Naive thymus-derived CD4-positive, alpha-beta T cell (primary cell): ENCODE measurements at regions of chr17 and their contacts with region 1.

Region 1: GRCh38 chr17:47229535-47230443 is 20.6 kb downstream of the MYL4 start:
- DNase-seq: peak; percentile 33 to 67 (median 61)
- ATAC-seq: peak; percentile 93
- H3K4me3 ChIP-seq: peak overlapping the region; percentile 22
- H3K4me3 Mint-ChIP-seq: peak overlapping the region; percentile 50 to 75 (median 62)
- H3K27ac ChIP-seq: no peak overlapping the region
- H3K27ac Mint-ChIP-seq: peak overlapping the region in 1 of 9 donors; percentile 32
- H3K4me1 ChIP-seq: peaks cover 0 to 3% of the 10 kb centered on the region in 2 donors
- H3K4me1 Mint-ChIP-seq: peaks cover 6 to 17% (median 11%) of the 10 kb centered on the region in 7 donors
- H3K27me3 ChIP-seq: no peaks in the 10 kb centered on the region
- H3K27me3 Mint-ChIP-seq: peaks cover 0 to 15% (median 7%) of the 10 kb centered on the region in 5 donors

Region 2: DNA sequence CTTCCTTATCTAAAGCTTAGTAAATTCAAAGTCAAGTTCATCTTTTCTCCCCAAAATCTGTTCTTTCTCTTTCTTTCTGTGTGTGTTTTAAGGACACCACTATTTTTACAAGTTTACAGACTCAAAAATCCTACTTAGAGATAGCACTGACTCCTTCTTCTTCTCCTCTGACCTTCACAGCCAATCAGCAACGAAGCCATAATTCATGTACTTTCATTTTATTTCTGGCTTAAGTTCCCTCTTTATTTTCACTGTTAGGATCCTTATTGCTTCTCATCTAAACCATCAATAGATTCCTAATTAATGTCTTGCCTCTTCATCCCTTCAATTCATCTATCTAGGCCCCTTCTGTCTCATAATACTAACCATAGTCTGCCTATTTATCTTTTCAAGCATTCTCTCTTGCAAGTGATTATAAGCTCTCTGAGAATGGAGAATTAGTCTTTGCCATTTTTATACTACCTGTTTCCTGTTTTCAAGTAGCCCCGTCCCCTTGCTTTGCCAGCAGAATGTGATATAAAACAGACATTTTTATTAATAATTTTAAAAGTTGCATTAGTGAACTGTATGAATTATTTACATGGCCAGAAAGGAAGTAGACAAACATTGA is 67.7 kb before region 1 on chr17:
- CTCF ChIA-PET with region 1: no interaction called
- POLR2A ChIA-PET with region 1: no interaction called
- intact Hi-C with region 1: no loop called
- DNase-seq: no peak
- ATAC-seq: no peak
- H3K4me3 ChIP-seq: no peak overlapping the region
- H3K4me3 Mint-ChIP-seq: peak overlapping the region in 8 of 10 donors; percentile 3 to 68 (median 24)
- H3K27ac ChIP-seq: no peak overlapping the region
- H3K27ac Mint-ChIP-seq: peak overlapping the region; percentile 8 to 64 (median 39)
- H3K4me1 ChIP-seq: no peaks in the 10 kb centered on the region
- H3K4me1 Mint-ChIP-seq: peaks cover 11 to 21% (median 15%) of the 10 kb centered on the region in 7 donors
- H3K27me3 ChIP-seq: no peaks in the 10 kb centered on the region
- H3K27me3 Mint-ChIP-seq: no peaks in the 10 kb centered on the region

Region 3: GRCh38 chr17:47315451-47316266 is 85.9 kb after region 1 on chr17:
- CTCF ChIA-PET with region 1: interaction called, 18 read pairs
- POLR2A ChIA-PET with region 1: no interaction called
- intact Hi-C with region 1: loop called (anchors 1 kb)
- DNase-seq: peak in 7 of 9 donors; percentile 30 to 56 (median 48)
- ATAC-seq: peak; percentile 90
- H3K4me3 ChIP-seq: no peak overlapping the region
- H3K4me3 Mint-ChIP-seq: no peak overlapping the region
- H3K27ac ChIP-seq: no peak overlapping the region
- H3K27ac Mint-ChIP-seq: no peak overlapping the region
- H3K4me1 ChIP-seq: no peaks in the 10 kb centered on the region
- H3K4me1 Mint-ChIP-seq: peaks cover 0 to 3% (median 0%) of the 10 kb centered on the region in 7 donors
- H3K27me3 ChIP-seq: no peaks in the 10 kb centered on the region
- H3K27me3 Mint-ChIP-seq: peaks cover 0 to 14% (median 0%) of the 10 kb centered on the region in 5 donors

Region 4: DNA sequence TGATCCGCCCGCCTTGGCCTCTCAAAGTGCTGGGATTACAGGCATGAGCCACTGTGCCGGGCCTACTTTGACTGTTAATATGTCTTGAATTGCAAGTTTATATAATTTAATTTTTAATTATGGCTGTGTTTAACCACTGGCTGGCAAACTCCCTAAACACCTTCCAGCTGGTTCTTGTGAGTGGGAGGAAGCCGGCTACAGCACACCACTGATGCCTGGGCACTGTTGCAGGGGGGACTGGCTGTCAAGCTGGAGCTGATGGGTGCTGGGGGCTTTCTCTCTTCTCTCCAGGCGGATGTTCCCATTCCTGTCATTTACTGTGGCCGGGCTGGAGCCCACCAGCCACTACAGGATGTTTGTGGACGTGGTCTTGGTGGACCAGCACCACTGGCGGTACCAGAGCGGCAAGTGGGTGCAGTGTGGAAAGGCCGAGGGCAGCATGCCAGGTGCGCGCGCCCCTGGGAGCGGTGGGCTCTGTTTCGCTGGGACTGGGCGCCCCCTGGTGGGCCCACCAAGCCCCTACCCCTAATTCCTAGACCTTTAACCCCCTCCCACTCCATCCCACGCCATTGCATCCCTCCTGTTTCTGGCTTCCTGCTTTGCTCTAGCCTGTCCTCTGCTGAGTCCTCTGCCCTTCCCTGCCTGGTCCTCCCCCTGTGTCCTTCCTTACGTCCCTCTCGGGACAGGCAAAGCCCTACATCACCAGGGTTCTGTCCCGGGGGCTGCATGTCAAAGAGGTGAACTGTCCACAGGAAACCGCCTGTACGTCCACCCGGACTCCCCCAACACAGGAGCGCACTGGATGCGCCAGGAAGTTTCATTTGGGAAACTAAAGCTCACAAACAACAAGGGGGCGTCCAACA is 512.8 kb after region 1 on chr17:
- CTCF ChIA-PET with region 1: no interaction called
- POLR2A ChIA-PET with region 1: no interaction called
- intact Hi-C with region 1: loop called in 1 of 2 experiments (anchors 2 kb)
- DNase-seq: peak; percentile 19 to 56 (median 40)
- ATAC-seq: peak; percentile 59
- H3K4me3 ChIP-seq: no peak overlapping the region
- H3K4me3 Mint-ChIP-seq: peak overlapping the region in 2 of 10 donors; percentile 25 to 43
- H3K27ac ChIP-seq: no peak overlapping the region
- H3K27ac Mint-ChIP-seq: no peak overlapping the region
- H3K4me1 ChIP-seq: peaks cover 0 to 41% of the 10 kb centered on the region in 2 donors
- H3K4me1 Mint-ChIP-seq: peaks cover 0 to 37% (median 12%) of the 10 kb centered on the region in 7 donors
- H3K27me3 ChIP-seq: no peaks in the 10 kb centered on the region
- H3K27me3 Mint-ChIP-seq: no peaks in the 10 kb centered on the region